Activated naive CD4-positive, alpha-beta T cell treated with anti-CD3 and anti-CD28 coated beads for 36 hours (primary cell): ENCODE measurements at regions of chr16 and their contacts with region 1.

Region 1: DNA sequence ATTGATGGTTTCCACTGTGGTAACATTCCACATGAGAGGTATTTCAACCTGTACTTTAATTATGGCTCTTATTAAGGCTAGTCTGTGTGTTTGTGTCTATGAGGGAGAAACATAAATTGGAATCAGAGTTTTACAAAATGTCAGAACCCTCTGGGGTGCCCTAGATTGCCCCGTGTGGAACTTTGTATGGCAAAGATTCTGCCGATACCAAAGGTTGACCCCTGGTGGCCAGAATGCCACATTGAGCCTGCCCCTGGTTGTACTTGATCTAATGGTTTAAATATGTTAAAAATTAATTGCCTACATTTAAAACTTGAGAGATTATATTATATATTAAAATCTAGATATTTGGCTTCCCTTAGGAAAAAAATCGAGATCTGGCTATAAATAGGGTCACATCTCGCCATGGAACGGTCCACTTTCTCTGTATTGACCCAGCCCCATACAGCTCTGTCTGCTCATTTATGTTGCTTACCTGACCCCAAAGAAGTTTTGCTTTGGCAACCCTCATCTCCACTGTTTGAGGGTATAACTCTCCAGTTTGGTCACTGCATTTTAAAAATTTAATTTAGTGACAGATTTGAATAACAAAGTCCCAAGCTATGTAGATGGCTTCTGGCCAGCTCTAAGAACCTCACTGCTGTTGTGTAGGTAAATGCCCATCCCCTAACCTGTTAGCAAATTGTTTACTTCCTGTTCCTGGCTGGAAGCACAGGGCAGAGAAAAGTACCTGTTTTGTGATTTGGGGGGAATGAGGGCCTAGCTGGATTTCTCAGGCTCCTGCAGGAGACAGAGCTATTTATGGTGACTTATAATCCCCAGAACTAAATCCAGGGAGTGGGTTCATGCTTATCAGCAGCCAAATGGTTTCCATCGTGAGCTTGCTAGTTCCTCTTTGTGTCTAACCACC is 95.0 kb downstream of the PLCG2 start:
- DNase-seq: peak; percentile 83
- H3K4me3 Mint-ChIP-seq: no peak overlapping the region
- H3K27ac Mint-ChIP-seq: no peak overlapping the region
- H3K4me1 Mint-ChIP-seq: peaks cover 12% of the 10 kb centered on the region
- H3K27me3 Mint-ChIP-seq: peaks cover 8% of the 10 kb centered on the region

Region 2: DNA sequence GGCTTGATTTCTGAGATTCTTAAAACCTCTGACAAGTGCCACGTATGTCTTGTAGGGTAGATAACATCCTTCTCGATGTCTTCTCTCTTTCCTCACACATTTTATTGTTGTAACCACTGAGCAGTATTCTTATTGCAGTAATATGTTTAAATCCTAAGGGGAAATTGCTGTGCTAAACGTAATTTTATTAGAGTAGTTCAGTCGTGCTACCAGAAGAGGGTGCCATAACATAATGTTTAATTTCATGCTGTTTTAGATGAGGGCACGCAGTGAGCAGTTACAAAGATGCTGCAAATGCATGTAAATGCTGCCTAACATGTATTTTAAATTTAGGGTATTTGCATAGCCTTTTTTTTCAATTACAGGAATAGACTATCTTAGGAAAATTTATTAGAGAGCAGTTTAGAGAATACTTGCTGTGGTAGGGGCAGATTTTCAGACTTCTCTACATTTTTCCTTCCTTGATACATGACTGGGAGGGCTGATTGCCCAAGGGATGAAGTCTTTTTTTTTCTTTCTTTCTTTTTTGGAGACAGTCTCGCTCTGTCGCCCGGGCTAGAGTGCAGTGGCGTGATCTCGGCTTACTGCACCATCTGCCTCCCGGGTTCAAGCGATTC is 507.7 kb before region 1 on chr16:
- CTCF ChIA-PET with region 1: interaction called, 3 read pairs
- intact Hi-C with region 1: loop called (anchors 5 kb)
- DNase-seq: peak; percentile 9
- H3K4me3 Mint-ChIP-seq: no peak overlapping the region
- H3K27ac Mint-ChIP-seq: no peak overlapping the region
- H3K4me1 Mint-ChIP-seq: no peaks in the 10 kb centered on the region
- H3K27me3 Mint-ChIP-seq: no peaks in the 10 kb centered on the region

Region 3: DNA sequence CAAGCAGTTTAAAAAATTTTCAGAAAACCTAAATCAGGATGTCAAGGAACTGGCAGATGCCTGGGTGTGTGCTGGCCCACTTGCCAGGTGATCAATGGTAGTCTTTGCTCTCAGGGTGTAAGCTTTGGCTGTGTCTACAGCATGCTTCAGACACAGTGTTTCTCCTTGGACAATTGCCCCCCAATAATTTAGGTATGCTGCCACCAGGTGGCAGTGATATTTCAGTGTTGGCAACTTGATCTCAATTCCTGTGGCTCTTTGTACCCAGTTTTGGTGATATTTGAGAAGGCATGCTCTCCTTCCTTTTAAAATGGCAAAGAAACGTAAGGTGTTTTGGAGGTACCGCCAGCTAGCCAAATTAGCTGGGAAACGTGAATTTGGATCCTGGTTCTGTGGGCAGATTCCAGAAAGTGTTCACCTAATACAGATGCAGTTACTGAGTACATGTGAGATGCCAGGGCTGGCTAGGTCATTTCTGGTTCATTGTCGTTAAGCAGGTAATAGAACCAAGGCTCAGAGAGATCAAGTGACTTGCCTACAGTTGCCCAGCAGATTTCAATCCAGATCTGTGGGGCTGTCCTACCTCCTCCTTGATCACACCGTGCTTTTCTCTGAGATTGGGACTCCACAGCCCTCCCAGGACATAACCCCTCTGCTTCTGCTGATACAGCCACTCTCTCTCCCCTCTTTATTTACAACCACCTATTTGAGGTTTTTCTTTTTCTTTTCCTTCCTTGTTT is 250.6 kb before region 1 on chr16:
- CTCF ChIA-PET with region 1: no interaction called
- intact Hi-C with region 1: loop called (anchors 5 kb)
- DNase-seq: peak; percentile 83
- H3K4me3 Mint-ChIP-seq: no peak overlapping the region
- H3K27ac Mint-ChIP-seq: peak overlapping the region; percentile 22
- H3K4me1 Mint-ChIP-seq: peaks cover 5% of the 10 kb centered on the region
- H3K27me3 Mint-ChIP-seq: no peaks in the 10 kb centered on the region

Region 4: GRCh38 chr16:81778861-81779535 is 95.1 kb before region 1 on chr16 and contains the start of gene PLCG2:
- CTCF ChIA-PET with region 1: interaction called, 3 read pairs
- intact Hi-C with region 1: loop called (anchors 5 kb)
- DNase-seq: peak; percentile 64
- H3K4me3 Mint-ChIP-seq: peak within 1 kb of the TSS; percentile 76
- H3K27ac Mint-ChIP-seq: no peak within 1 kb of the TSS
- H3K4me1 Mint-ChIP-seq: peaks cover 10% of the 10 kb centered on the region
- H3K27me3 Mint-ChIP-seq: peaks cover 35% of the 10 kb centered on the region
- total RNA-seq, gene PLCG2: 12.0 to 13.4 TPM

Region 5: GRCh38 chr16:81855552-81856153 is 18.4 kb before region 1 on chr16:
- CTCF ChIA-PET with region 1: interaction called, 17 read pairs
- intact Hi-C with region 1: no loop called
- DNase-seq: peak; percentile 12
- H3K4me3 Mint-ChIP-seq: no peak overlapping the region
- H3K27ac Mint-ChIP-seq: no peak overlapping the region
- H3K4me1 Mint-ChIP-seq: no peaks in the 10 kb centered on the region
- H3K27me3 Mint-ChIP-seq: peaks cover 3% of the 10 kb centered on the region

Region 6: DNA sequence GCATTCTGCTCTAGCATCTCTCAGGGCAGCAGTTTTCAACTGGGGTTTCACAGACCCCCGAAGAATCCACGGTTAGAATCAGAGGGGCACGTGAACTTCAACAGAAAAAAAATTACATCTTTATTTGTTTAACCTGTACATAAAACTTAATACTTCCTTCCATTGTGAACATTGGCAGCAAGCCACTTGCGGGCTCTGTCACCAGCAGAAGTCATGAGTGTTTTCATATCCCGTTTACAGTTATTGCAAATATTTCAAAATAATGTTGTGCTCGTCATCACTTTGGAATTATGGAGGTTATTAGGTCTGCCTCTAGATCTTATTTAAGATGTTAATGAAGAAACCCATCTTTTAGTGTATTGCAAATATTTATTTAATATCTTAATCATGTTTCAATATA is 27.4 kb after region 1 on chr16:
- CTCF ChIA-PET with region 1: no interaction called
- intact Hi-C with region 1: no loop called
- DNase-seq: no peak
- H3K4me3 Mint-ChIP-seq: no peak overlapping the region
- H3K27ac Mint-ChIP-seq: no peak overlapping the region
- H3K4me1 Mint-ChIP-seq: no peaks in the 10 kb centered on the region
- H3K27me3 Mint-ChIP-seq: no peaks in the 10 kb centered on the region

Region 7: DNA sequence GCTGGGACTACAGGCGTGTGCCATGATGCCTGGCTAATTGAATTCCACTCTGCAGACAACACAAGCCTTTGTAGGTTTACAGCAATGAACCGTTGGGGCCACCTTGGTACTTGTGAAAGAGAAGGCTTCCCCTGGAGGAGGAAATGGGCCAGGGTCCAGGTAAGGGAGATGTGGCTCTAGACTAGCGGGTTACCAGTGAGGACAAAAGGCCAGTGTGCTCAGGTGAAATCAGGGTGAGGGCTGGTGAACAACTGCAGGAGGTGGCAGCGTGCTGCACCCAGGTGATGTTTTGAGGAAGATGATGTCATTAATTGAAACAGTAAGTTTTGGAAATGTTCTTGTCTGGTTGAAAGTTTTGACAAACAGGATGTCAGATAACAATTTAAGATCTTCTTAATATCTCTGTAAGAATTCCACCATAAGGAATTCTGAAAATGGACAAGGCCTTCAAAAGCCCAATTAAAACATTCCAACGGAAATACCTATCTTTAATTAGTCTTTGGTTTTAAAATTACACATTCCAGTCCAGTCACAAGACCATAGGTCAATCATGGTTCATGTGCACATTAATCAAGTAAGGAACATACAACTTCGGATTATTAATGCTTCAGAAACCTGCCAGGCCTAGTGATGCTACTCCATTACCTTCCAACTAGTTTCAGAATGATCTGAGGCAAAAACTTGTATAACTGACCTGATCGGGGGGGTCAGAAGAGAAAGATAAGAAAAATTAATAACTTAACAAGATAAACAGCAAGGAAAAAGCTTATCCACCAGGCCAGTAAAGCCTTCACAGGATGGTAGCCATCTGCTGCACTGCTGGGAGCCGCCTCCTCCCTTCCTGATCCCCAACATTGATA is 130.8 kb after region 1 on chr16:
- CTCF ChIA-PET with region 1: no interaction called
- intact Hi-C with region 1: no loop called
- DNase-seq: no peak
- H3K4me3 Mint-ChIP-seq: no peak overlapping the region
- H3K27ac Mint-ChIP-seq: no peak overlapping the region
- H3K4me1 Mint-ChIP-seq: peaks cover 6% of the 10 kb centered on the region
- H3K27me3 Mint-ChIP-seq: no peaks in the 10 kb centered on the region